ENCODE measurements at regions of chr15 and their contacts with region 1.

Region 1: DNA sequence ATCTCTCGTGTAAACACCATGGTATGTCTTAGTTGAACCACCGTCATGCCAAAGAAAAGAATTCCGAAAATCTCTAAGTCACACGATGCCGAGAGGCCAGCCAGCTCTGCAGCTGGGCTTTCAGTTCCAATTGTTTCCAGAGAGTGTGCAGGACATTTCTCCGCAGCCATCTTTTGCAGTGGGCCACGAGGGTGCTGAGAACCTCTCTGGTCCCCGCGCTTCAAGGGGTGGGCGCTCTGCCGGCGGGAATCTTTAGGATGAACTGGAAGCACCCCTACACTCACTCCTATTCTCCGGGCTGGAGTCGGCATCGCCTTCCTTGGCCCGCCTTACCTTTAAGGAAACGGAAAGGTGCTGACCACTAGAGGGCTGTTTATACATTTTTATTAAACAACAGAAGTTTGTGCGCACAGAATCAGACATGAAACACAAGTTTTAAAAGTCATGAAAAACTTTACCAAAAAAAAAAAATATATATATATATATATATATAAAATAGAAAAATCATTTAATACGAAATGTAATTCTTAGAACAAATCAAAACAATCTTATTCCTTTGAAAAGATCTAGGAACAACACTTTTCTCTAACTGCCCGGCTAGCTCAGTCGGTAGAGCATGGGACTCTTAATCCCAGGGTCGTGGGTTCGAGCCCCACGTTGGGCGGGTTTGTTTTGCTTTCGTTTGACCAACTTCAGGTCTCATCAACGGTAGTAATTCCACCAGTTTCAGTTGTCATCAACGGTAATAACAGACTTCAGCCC is 12.5 kb upstream of the MORF4L1 start:
- H3K4me3 ChIP-seq: peak overlapping the region; percentile 64
- H3K27ac ChIP-seq: peak overlapping the region; percentile 83
- H3K4me1 ChIP-seq: peaks cover 3% of the 10 kb centered on the region; the same call in 1 of the 2 replicates
- CTCF ChIP-seq: peak; percentile 62

Region 2: GRCh38 chr15:78795670-78796069 is 64.5 kb before region 1 on chr15:
- CTCF ChIA-PET with region 1: no interaction called
- POLR2A ChIA-PET with region 1: no interaction called
- H3K4me3 ChIP-seq: no peak overlapping the region
- H3K27ac ChIP-seq: no peak overlapping the region
- H3K4me1 ChIP-seq: no peaks in the 10 kb centered on the region
- CTCF ChIP-seq: no peak

Region 3: DNA sequence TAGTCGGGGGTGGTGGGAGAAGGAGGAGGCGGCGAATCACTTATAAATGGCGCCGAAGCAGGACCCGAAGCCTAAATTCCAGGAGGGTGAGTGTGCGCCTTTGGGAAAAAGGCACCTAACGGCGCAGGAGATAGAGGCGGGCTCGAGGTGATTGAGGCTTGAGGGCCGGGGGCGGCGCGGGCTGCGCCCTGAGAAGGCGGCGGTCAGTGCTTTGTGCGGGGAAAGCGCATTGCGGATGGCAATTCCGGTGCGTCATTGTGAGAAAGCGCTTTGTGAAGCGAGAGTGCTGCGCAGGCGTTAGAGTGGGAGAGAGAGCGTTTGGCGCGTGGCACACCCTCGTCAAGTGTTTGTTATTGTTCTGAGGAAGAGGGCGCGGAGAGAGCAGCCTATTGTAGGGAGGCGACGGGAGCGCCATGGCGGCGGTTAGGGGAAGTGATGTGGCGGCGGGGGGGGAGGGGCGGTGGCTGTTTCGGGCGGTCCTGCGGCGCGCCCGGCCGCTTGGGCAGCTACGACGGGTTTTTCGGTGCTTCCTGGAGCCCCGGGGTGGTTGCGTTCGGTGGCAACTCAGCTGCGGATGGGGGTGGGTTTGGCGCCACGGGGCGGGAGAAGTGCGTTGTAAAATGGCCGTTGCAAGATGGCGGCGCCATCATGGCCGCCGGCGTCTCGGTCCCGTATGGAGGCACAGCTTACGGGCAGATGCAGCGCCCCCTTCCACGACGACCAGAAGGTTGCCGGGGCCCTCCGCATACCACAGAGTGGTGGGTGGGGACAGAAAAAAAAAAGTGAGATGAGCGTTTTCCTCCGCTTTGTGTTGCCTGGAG is 13.0 kb after region 1 on chr15:
- CTCF ChIA-PET with region 1: interaction called, 12 read pairs
- POLR2A ChIA-PET with region 1: interaction called, 12 read pairs
- H3K4me3 ChIP-seq: peak overlapping the region; percentile 79
- H3K27ac ChIP-seq: peak overlapping the region; percentile 100
- H3K4me1 ChIP-seq: peaks cover 18% of the 10 kb centered on the region
- CTCF ChIP-seq: peak; percentile 93